Activated CD4-positive, alpha-beta T cell treated with anti-CD3 and anti-CD28 coated beads for 36 hours (primary cell): ENCODE measurements at regions of chr9 and their contacts with region 1.

Region 1: DNA sequence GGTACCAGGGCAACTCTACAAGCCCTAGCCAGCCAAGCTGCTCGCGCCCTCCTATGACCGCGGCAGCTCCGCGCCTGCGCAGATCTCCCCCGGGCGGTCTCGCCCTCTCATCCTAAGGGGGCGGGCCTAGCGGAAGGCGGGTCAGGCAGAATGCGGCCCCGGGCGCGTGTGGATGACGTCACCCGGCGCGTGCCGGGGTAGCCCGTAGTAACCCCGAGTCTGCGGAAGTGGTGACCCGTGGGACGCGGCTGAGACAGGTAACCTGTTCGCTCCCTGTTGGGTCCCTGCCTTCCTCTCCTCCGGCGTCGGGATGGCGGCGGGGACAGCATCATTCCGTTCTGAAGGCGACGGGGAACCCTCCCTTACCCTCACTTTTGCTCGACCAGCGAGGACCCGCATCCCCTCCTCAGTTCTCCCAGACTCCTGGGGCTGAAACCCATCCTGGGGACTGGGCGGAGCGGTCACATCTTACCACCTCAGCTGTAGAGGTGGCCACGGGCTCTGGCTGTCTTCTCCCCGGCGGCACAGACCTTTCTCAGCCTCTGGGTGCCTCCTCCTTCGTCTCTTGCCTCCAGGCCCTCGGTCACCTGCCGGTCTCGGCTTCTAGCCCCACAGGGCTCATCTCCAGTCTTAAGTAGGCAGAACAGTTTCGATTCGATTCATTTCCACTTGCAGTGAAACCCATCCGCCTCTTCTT is at the start of gene AOPEP:
- DNase-seq: peak; percentile 100
- ATAC-seq: peak; percentile 98
- H3K4me3 Mint-ChIP-seq: peak within 1 kb of the TSS; percentile 94
- H3K27ac Mint-ChIP-seq: peak within 1 kb of the TSS; percentile 97
- H3K4me1 Mint-ChIP-seq: peaks cover 8% of the 10 kb centered on the region
- H3K27me3 Mint-ChIP-seq: no peaks in the 10 kb centered on the region
- total RNA-seq, gene AOPEP: 8.9 to 9.5 TPM

Region 2: GRCh38 chr9:93575796-93576257 is 1150.8 kb before region 1 on chr9:
- CTCF ChIA-PET with region 1: no interaction called
- POLR2A ChIA-PET with region 1: no interaction called
- intact Hi-C with region 1: loop called in 1 of 2 experiments (anchors 10 kb)
- DNase-seq: peak; percentile 64
- ATAC-seq: peak; percentile 39
- H3K4me3 Mint-ChIP-seq: peak overlapping the region; percentile 78
- H3K27ac Mint-ChIP-seq: peak overlapping the region; percentile 91
- H3K4me1 Mint-ChIP-seq: peaks cover 32% of the 10 kb centered on the region
- H3K27me3 Mint-ChIP-seq: no peaks in the 10 kb centered on the region

Region 3: DNA sequence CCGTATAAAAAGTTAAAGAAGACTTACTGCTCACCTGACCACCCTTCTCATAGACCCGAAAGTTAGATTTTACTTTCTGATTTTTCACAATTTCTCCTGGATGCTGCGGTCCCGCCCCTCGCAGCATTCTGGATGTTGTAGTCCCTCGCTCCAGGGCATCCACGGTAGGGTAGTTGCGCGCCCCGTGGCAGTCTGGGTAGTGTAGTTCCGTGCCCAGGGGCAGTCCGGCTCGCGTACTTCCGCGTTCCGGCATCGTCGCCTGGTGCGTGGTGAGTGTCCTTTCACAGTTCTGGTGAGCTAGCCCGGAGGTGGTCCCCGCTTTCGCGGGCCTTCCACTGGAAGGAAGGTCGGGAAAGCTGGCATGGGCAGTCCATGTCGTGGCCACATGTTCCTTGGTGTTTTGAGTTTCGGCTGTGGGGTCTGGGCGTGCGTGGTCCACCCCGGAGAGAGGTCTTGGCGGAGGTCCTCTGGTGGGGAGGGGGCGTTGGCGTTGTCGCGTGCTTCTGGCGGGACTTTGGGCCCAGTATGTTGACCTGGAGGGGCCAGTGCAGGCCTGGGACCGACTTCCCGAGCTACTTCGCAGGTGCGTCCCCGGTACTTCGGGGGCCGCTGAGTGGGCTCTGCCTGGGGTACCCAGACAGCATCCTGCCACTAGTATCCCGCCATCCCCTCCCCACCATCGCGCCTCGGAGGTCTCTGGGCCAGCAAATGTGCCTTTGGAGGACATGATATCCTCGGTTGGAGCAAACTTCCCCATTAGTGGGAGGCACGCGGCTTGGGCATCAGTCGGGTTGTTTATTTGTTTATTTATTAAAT is 467.4 kb before region 1 on chr9 and contains the start of gene ZNF169:
- CTCF ChIA-PET with region 1: no interaction called
- POLR2A ChIA-PET with region 1: no interaction called
- intact Hi-C with region 1: loop called in 1 of 2 experiments (anchors 1 kb)
- DNase-seq: peak; percentile 96
- ATAC-seq: peak; percentile 100
- H3K4me3 Mint-ChIP-seq: peak within 1 kb of the TSS; percentile 96
- H3K27ac Mint-ChIP-seq: peak within 1 kb of the TSS; percentile 98
- H3K4me1 Mint-ChIP-seq: peaks cover 28% of the 10 kb centered on the region
- H3K27me3 Mint-ChIP-seq: peaks cover 6% of the 10 kb centered on the region
- total RNA-seq, gene ZNF169: 6.4 to 6.7 TPM

Region 4: GRCh38 chr9:94656200-94656599 is 70.4 kb before region 1 on chr9:
- CTCF ChIA-PET with region 1: no interaction called
- POLR2A ChIA-PET with region 1: no interaction called
- intact Hi-C with region 1: loop called in 1 of 2 experiments (anchors 1 kb)
- DNase-seq: peak; percentile 72
- ATAC-seq: peak; percentile 100
- H3K4me3 Mint-ChIP-seq: peak overlapping the region; percentile 63
- H3K27ac Mint-ChIP-seq: peak overlapping the region; percentile 70
- H3K4me1 Mint-ChIP-seq: peaks cover 18% of the 10 kb centered on the region
- H3K27me3 Mint-ChIP-seq: peaks cover 4% of the 10 kb centered on the region

Region 5: DNA sequence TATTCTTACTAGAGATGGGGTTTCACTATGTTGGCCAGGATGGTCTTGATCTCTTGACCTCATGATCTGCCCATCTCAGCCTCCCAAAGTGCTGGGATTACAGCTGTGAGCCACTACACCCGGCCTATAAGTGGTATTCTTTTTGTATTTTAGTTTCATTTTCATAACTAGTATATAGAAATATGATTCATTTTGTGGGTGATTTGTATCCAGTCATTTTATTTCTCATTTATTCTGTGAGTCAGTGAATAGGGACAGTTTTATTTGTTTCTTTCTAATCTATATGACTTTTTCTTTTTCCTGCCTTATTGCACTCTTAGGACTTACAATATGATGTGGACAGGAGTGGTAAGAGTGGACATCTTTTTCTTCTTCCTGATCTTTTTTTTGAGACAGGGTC is 112.8 kb after region 1 on chr9:
- CTCF ChIA-PET with region 1: no interaction called
- POLR2A ChIA-PET with region 1: no interaction called
- intact Hi-C with region 1: loop called in 1 of 2 experiments (anchors 1 kb)
- DNase-seq: peak; percentile 25
- ATAC-seq: peak; percentile 93
- H3K4me3 Mint-ChIP-seq: no peak overlapping the region
- H3K27ac Mint-ChIP-seq: peak overlapping the region; percentile 33
- H3K4me1 Mint-ChIP-seq: peaks cover 19% of the 10 kb centered on the region
- H3K27me3 Mint-ChIP-seq: no peaks in the 10 kb centered on the region

Region 6: DNA sequence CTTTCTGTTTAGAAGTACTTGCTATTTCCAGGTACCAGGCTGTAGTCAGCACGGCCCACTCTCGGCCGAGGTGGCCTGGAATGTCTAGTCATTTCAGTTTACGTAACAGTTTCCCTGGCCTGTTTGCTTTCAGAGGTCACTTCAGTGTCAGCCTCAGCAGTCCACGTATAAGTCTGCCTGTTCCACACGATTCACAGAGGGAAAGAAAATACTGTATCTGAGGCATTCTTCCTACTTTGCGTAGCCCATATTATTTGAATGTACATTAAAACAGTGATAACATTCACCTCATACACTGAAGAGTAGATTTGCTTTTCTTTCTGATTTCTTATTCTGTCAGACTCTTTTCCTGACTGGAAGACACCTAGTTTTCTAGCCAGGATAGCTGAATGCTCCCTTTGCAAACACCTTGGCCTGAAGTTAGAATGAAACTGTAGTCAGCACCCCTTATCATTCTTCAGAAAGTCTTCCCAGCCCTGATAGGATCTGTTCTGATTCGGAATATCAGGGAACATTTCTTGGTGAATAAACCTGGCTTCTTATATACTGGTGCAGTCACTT is 140.7 kb after region 1 on chr9:
- CTCF ChIA-PET with region 1: no interaction called
- POLR2A ChIA-PET with region 1: no interaction called
- intact Hi-C with region 1: no loop called
- DNase-seq: no peak
- ATAC-seq: no peak
- H3K4me3 Mint-ChIP-seq: no peak overlapping the region
- H3K27ac Mint-ChIP-seq: no peak overlapping the region
- H3K4me1 Mint-ChIP-seq: peaks cover 42% of the 10 kb centered on the region
- H3K27me3 Mint-ChIP-seq: peaks cover 3% of the 10 kb centered on the region

Region 7: DNA sequence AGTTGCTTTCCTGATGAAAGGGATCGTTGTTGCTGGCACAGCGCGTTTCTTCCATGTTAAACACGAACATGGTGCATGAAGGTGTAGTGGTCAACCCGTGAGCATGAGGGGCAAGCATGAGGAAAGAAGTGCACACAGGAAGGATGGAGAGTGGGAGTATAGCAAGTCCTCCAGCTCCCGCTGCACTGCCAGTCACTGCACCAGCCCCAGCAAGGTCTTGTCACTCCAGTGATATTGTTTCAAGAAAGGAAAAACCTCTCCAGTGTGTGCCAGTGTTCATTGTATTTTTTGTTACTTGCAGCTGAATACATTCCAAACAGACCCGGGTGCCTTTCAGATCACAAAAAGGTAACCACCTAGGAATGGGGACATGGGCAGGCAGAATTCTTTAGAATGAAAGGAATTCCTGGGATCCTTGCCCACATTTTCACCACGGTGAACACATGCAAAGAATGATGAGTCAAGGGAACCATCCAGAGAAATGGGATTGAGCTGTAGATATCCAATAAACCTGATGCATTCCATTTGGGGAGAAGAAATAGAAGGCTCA is 186.1 kb after region 1 on chr9:
- CTCF ChIA-PET with region 1: no interaction called
- POLR2A ChIA-PET with region 1: no interaction called
- intact Hi-C with region 1: no loop called
- DNase-seq: no peak
- ATAC-seq: no peak
- H3K4me3 Mint-ChIP-seq: no peak overlapping the region
- H3K27ac Mint-ChIP-seq: no peak overlapping the region
- H3K4me1 Mint-ChIP-seq: peaks cover 10% of the 10 kb centered on the region
- H3K27me3 Mint-ChIP-seq: no peaks in the 10 kb centered on the region

Region 8: DNA sequence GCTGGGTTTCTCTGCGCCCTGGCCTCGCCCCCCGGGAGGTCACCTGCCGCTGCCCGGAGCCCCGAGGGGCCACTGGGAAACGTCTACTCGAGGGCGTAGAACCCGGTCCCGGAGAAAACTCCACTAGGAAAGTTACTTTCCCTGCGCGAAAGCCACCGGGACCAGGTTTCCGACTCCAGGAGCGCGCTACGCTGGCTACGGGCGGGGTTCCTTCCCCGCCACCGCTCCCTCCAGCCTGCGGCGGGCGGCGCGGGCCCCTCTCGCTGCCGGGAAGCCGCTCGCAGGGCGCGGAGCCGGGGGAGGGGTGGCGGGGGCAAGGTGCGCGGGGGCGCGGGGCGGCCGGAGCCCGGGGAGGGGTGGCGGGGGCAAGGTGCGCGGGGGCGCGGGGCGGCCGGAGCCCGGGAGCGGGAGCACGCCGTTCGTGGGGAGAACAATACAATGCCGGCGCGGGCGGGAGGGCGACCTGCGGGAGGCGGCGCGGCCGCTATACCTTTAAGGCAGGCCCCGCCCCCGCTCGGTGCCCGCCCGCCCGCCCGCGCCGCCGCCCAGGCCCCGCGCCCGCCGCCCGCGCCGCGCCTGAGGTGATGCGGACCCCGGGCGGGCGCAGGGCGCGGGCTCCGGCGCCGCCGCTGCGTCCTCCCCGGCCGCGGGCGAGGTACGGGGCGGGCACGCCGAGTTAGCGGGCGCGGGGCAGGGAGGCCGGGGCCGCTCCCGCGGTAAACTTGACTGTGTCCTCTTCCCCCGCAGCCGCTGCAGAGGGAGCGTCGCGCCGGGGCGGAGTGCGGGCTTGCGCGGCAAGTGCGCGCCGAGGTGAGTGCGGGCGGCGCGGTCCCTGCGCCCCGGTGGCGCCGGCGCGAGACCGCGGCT is 278.0 kb after region 1 on chr9:
- CTCF ChIA-PET with region 1: no interaction called
- POLR2A ChIA-PET with region 1: no interaction called
- intact Hi-C with region 1: loop called in 1 of 2 experiments (anchors 2 kb)
- DNase-seq: peak; percentile 57
- ATAC-seq: peak; percentile 65
- H3K4me3 Mint-ChIP-seq: peak overlapping the region; percentile 69
- H3K27ac Mint-ChIP-seq: no peak overlapping the region
- H3K4me1 Mint-ChIP-seq: peaks cover 19% of the 10 kb centered on the region
- H3K27me3 Mint-ChIP-seq: peaks cover 28% of the 10 kb centered on the region

Region 9: GRCh38 chr9:95317119-95317892 is 590.7 kb after region 1 on chr9 and contains the start of gene FANCC:
- CTCF ChIA-PET with region 1: no interaction called
- POLR2A ChIA-PET with region 1: no interaction called
- intact Hi-C with region 1: loop called in 1 of 2 experiments (anchors 1 kb)
- DNase-seq: peak; percentile 90
- ATAC-seq: peak; percentile 84
- H3K4me3 Mint-ChIP-seq: peak within 1 kb of the TSS; percentile 85
- H3K27ac Mint-ChIP-seq: peak within 1 kb of the TSS; percentile 95
- H3K4me1 Mint-ChIP-seq: peaks cover 15% of the 10 kb centered on the region
- H3K27me3 Mint-ChIP-seq: peaks cover 7% of the 10 kb centered on the region
- total RNA-seq, gene FANCC: 15.9 to 16.7 TPM

Region 10: GRCh38 chr9:96009690-96010472 is 1283.2 kb after region 1 on chr9:
- CTCF ChIA-PET with region 1: no interaction called
- POLR2A ChIA-PET with region 1: no interaction called
- intact Hi-C with region 1: no loop called
- DNase-seq: peak; percentile 75
- ATAC-seq: peak; percentile 77
- H3K4me3 Mint-ChIP-seq: no peak overlapping the region
- H3K27ac Mint-ChIP-seq: peak overlapping the region; percentile 76
- H3K4me1 Mint-ChIP-seq: peaks cover 21% of the 10 kb centered on the region
- H3K27me3 Mint-ChIP-seq: no peaks in the 10 kb centered on the region